Aorta (tissue), 5 donors: ENCODE measurements at regions of chr2 and their contacts with region 1.

Region 1: GRCh38 chr2:224909885-224910573 is 132.2 kb downstream of the DOCK10 start:
- DNase-seq: peak; percentile 76 to 84
- ATAC-seq: peak; percentile 92
- H3K4me3 ChIP-seq: no peak overlapping the region
- H3K27ac ChIP-seq: peak overlapping the region; percentile 85 to 90
- H3K4me1 ChIP-seq: peaks cover 3 to 11% of the 10 kb centered on the region in 2 donors
- H3K27me3 ChIP-seq: no peaks in the 10 kb centered on the region

Region 2: DNA sequence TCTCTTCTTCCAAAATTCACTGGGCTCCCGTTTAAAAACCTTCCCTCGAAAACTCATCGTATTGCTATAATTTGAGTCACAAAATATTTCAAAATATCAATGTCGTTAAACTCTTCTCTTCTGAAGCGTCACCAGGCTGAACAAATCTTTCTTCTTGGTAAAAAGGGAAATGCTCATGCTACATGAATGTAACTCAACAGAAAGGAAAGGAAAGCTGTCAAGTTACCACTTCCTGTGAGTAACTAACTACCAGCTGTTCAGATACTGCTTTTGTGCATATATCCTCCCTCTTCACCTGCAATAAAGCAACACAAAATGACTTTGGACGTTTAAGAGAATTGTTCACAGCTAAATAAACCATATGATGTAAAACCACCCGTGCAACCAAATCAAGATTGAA is 36.9 kb after region 1 on chr2:
- intact Hi-C with region 1: loop called in 1 of 2 experiments (anchors 1 kb)
- DNase-seq: no peak
- ATAC-seq: no peak
- H3K4me3 ChIP-seq: no peak overlapping the region
- H3K27ac ChIP-seq: no peak overlapping the region
- H3K4me1 ChIP-seq: peaks cover 0 to 20% of the 10 kb centered on the region in 2 donors
- H3K27me3 ChIP-seq: no peaks in the 10 kb centered on the region